ENCODE measurements at regions of chr13 and their contacts with region 1.

Region 1: DNA sequence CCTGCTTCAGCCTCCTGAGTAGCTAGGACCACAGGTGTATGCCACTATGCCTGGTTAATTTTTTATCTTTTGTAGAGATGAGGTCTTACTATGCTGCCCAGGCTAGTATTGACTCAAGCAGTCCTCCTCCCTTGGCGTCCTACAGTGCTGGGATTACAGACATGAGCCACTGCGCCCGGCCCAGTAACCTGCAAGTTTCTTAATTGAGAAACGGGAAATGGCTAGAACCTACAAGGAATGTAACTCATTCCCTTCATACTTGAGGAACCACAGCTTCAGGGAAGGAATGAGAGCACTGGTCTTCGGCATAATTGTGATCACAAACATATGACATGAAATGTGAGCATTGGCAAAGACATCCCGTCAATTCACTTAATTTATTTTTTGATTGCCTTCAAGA is 157.0 kb downstream of the KLF5 start:
- DNase-seq: peak in 1 of 2 experiments; percentile 36
- H3K4me3 ChIP-seq: no peak overlapping the region
- H3K27ac ChIP-seq: no peak overlapping the region
- H3K4me1 ChIP-seq: peaks cover 15% of the 10 kb centered on the region
- H3K27me3 ChIP-seq: no peaks in the 10 kb centered on the region
- CTCF ChIP-seq: no peak

Region 2: DNA sequence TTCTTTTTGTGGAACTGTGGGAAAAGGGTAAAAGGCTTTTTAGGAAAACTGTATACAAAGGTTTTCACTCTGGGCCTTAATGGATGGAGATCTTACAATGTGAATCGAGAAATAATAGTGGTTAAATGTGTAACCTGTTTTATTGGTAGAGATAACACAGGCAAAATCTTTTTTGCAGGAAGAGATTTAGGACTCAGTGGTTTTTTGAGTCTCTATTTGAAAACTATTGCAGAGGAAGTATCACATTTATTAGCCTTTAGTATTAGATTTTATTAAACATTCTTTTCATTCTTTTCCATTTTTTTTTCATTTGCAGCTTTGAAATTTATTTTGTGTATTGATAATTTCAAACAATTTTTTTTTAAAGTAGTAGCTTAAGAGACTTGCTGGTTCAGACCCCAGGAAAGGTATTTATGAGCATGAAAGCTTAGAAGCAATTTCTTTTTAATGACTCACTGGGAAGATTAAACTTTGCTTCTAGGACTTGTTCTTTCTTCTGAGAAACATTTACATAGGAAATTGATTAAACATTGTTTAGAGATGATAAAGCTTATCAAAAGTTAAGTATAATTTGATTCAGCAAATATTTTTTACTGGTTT is 146.5 kb before region 1 on chr13:
- CTCF ChIA-PET with region 1: no interaction called
- POLR2A ChIA-PET with region 1: interaction called, 13 read pairs
- intact Hi-C with region 1: no loop called
- DNase-seq: peak in 1 of 2 experiments; percentile 62
- H3K4me3 ChIP-seq: no peak overlapping the region
- H3K27ac ChIP-seq: peak overlapping the region; percentile 23
- H3K4me1 ChIP-seq: peaks cover 69% of the 10 kb centered on the region
- H3K27me3 ChIP-seq: no peaks in the 10 kb centered on the region
- CTCF ChIP-seq: no peak

Region 3: DNA sequence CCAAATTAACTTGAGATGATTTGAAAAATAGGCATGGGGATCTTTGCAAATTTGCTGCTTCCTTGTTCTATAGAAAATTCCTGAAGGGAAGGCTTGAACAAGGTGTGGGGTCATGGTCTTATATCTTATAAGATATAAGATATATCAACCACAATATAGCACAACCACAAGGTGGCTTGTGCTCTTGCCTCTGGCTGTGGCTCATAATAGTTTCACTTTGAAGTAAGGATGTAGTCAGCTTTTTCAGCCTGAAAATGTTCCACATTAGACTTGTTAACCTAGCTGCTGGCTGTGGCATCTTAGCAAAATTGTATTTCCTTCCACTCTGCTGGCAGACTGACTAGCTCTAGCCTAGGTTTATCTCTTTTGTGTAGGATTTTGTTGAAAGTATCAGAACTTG is 12.7 kb after region 1 on chr13:
- CTCF ChIA-PET with region 1: no interaction called
- POLR2A ChIA-PET with region 1: interaction called, 27 read pairs
- intact Hi-C with region 1: no loop called
- DNase-seq: no peak
- H3K4me3 ChIP-seq: no peak overlapping the region
- H3K27ac ChIP-seq: no peak overlapping the region
- H3K4me1 ChIP-seq: peaks cover 12% of the 10 kb centered on the region
- H3K27me3 ChIP-seq: no peaks in the 10 kb centered on the region
- CTCF ChIP-seq: peak; percentile 45; the same call in 1 of the 2 replicates

Measured in PC-9 (cell line).